ENCODE measurements at regions of chr6 and their contacts with region 1.

Region 1: DNA sequence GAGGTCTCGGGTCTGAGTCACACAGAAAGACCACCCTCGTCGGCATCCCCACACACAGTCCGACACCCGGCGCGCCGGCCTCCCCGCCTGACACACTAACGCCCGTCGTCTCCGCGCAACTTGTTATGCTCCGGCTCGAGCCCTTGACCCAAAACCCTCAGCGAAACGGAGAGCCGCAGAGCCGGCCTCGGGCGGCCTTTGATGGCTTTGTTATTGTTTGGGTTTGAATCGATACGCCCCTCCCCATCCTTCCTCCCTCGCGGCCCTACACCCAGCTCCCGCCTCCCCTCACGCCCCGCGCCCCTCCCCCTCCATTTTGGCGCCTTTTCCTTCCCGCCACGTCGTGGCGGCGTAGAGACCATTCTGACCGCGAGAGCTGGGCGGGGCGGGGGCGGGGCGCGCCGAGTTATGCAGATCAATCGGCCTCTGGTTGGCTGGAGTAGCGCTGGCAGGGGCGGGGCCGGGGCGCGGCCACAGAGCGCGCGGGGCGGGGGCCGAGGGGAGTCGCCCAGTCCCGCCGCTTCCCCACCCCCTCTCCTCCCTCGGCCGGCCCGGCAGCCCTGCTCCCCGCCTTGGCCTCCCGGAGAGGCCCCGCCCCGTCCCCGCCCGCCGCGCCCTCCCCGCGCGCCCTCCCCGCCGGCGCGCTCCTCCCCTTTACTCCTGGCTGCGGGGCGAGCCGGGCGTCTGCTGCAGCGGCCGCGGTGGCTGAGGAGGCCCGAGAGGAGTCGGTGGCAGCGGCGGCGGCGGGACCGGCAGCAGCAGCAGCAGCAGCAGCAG is at the start of gene PIM1:
- DNase-seq: peak; percentile 99 to 100 (median 100)
- H3K4me3 ChIP-seq: peak within 1 kb of the TSS; percentile 84
- H3K27ac ChIP-seq: peak within 1 kb of the TSS; percentile 70 to 91
- H3K4me1 ChIP-seq: peaks cover 4% of the 10 kb centered on the region
- H3K27me3 ChIP-seq: no peaks in the 10 kb centered on the region
- CTCF ChIP-seq: no peak
- EP300 ChIP-seq: no peak
- POLR2A ChIP-seq: peak; percentile 90
- total RNA-seq, gene PIM1: 41.4 to 135 (median 64.9) TPM

Region 2: GRCh38 chr6:37029249-37029971 is 140.3 kb before region 1 on chr6:
- intact Hi-C with region 1: no loop called
- DNase-seq: peak; percentile 56 to 74 (median 64)
- H3K4me3 ChIP-seq: no peak overlapping the region
- H3K27ac ChIP-seq: no peak overlapping the region
- H3K4me1 ChIP-seq: no peaks in the 10 kb centered on the region
- H3K27me3 ChIP-seq: no peaks in the 10 kb centered on the region
- CTCF ChIP-seq: peak; percentile 55 to 68 (median 66)
- EP300 ChIP-seq: no peak
- POLR2A ChIP-seq: no peak

Region 3: GRCh38 chr6:37051138-37052026 is 118.3 kb before region 1 on chr6:
- intact Hi-C with region 1: loop called (anchors 1 to 5 kb)
- DNase-seq: peak; percentile 85 to 92 (median 92)
- H3K4me3 ChIP-seq: no peak overlapping the region
- H3K27ac ChIP-seq: no peak overlapping the region
- H3K4me1 ChIP-seq: peaks cover 2% of the 10 kb centered on the region
- H3K27me3 ChIP-seq: no peaks in the 10 kb centered on the region
- CTCF ChIP-seq: peak; percentile 87 to 97 (median 95)
- EP300 ChIP-seq: no peak
- POLR2A ChIP-seq: no peak

Region 4: DNA sequence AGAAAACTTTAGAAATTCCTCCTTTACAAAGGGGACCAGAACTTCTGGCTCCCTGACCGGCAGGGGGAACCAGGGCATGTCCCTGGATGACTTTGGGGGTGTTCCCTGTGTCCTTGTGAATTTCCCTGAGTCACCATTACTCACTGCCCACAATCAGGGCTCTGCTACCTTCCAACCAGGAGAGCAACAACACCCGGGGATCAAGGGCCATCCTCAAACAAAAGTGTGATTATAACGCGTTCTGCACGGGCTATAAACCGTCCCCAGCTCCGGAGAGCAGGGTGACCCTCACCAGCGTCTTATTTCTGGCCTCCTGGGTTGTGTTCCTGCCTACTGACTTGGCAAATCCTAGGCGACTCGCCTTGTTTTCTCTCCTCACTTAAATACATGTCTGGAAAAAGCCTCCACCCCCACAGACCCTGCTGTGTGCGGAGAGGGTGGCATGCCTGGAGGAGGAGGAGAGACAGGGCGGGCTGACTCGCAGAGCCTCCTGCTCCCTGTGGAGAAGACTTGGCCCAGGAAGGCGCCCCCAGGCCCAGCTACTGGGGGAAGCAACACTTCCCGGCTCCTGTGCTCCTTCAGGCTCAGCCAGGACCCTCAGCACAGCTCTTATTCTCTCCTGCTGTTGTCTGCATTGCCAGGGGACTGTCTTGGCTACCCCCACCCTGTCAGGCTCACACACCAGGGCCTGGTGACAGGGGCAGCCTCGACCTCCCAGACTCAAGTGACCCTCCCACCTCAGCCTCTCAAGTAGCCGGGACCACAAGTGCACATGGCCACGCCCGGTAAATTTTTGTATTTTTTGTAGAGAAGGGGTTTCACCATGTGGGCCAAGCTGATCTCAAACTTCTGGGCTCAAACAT is 110.1 kb before region 1 on chr6:
- intact Hi-C with region 1: loop called in 2 of 4 experiments (anchors 2 to 5 kb)
- DNase-seq: peak; percentile 71 to 84 (median 77)
- H3K4me3 ChIP-seq: no peak overlapping the region
- H3K27ac ChIP-seq: peak overlapping the region in 1 of 2 donors; percentile 62
- H3K4me1 ChIP-seq: peaks cover 2% of the 10 kb centered on the region
- H3K27me3 ChIP-seq: no peaks in the 10 kb centered on the region
- CTCF ChIP-seq: peak; percentile 12 to 64 (median 47)
- EP300 ChIP-seq: no peak
- POLR2A ChIP-seq: no peak